Activated naive CD4-positive, alpha-beta T cell treated with anti-CD3 and anti-CD28 coated beads for 36 hours (primary cell): ENCODE measurements at regions of chr3 and their contacts with region 1.

Region 1: GRCh38 chr3:111616417-111617105 is 21.4 kb upstream of the ZBED2 start:
- DNase-seq: peak; percentile 83
- H3K4me3 Mint-ChIP-seq: no peak overlapping the region
- H3K27ac Mint-ChIP-seq: peak overlapping the region; percentile 97
- H3K4me1 Mint-ChIP-seq: peaks cover 79% of the 10 kb centered on the region
- H3K27me3 Mint-ChIP-seq: no peaks in the 10 kb centered on the region

Region 2: GRCh38 chr3:109806929-109807328 is 1809.6 kb before region 1 on chr3:
- CTCF ChIA-PET with region 1: interaction called, 4 read pairs
- intact Hi-C with region 1: loop called (anchors 10 kb)
- DNase-seq: peak; percentile 34
- H3K4me3 Mint-ChIP-seq: no peak overlapping the region
- H3K27ac Mint-ChIP-seq: no peak overlapping the region
- H3K4me1 Mint-ChIP-seq: peaks cover 37% of the 10 kb centered on the region
- H3K27me3 Mint-ChIP-seq: no peaks in the 10 kb centered on the region

Region 3: GRCh38 chr3:110955301-110955880 is 661.2 kb before region 1 on chr3:
- CTCF ChIA-PET with region 1: no interaction called
- intact Hi-C with region 1: no loop called
- DNase-seq: no peak
- H3K4me3 Mint-ChIP-seq: no peak overlapping the region
- H3K27ac Mint-ChIP-seq: no peak overlapping the region
- H3K4me1 Mint-ChIP-seq: no peaks in the 10 kb centered on the region
- H3K27me3 Mint-ChIP-seq: peaks cover 2% of the 10 kb centered on the region

Region 4: GRCh38 chr3:111260878-111261277 is 355.7 kb before region 1 on chr3:
- CTCF ChIA-PET with region 1: interaction called, 3 read pairs
- intact Hi-C with region 1: loop called (anchors 5 kb)
- DNase-seq: no peak
- H3K4me3 Mint-ChIP-seq: no peak overlapping the region
- H3K27ac Mint-ChIP-seq: no peak overlapping the region
- H3K4me1 Mint-ChIP-seq: peaks cover 13% of the 10 kb centered on the region
- H3K27me3 Mint-ChIP-seq: peaks cover 2% of the 10 kb centered on the region

Region 5: DNA sequence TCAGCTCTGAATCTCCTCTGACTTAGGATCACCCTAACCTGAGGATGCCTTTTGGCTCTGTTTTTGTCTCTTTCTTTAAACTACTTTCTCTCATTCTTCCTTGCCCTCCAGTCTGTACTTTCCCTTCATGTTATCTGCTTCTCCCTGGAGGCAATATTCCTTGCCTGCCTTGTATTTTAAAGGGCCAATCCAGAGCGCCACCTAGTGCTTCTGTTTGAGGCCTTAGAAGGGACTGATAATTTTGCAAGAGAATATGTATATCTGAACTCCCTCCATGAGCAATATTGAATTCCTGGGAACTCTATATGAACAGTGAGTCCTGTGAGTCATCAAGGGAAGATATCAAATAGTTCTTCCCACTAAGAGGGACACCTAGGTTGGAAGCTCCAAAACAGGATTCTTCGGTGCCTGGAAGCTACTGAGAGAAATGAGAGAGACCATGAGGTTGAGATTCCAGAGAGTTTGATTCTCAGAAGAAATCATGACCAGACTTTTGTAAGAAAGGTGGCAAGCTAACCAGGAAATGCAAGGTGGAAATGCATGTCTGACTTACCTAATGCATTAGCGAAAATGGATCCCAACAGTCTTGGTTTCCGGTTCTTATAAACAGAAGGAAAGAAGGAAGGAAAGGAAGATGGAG is 278.4 kb before region 1 on chr3:
- CTCF ChIA-PET with region 1: no interaction called
- intact Hi-C with region 1: loop called (anchors 5 kb)
- DNase-seq: peak; percentile 70
- H3K4me3 Mint-ChIP-seq: no peak overlapping the region
- H3K27ac Mint-ChIP-seq: no peak overlapping the region
- H3K4me1 Mint-ChIP-seq: peaks cover 15% of the 10 kb centered on the region
- H3K27me3 Mint-ChIP-seq: peaks cover 3% of the 10 kb centered on the region

Region 6: GRCh38 chr3:111547631-111548030 is 68.9 kb before region 1 on chr3:
- CTCF ChIA-PET with region 1: interaction called, 36 read pairs
- intact Hi-C with region 1: loop called (anchors 1 kb)
- DNase-seq: peak; percentile 74
- H3K4me3 Mint-ChIP-seq: no peak overlapping the region
- H3K27ac Mint-ChIP-seq: no peak overlapping the region
- H3K4me1 Mint-ChIP-seq: peaks cover 39% of the 10 kb centered on the region
- H3K27me3 Mint-ChIP-seq: no peaks in the 10 kb centered on the region

Region 7: DNA sequence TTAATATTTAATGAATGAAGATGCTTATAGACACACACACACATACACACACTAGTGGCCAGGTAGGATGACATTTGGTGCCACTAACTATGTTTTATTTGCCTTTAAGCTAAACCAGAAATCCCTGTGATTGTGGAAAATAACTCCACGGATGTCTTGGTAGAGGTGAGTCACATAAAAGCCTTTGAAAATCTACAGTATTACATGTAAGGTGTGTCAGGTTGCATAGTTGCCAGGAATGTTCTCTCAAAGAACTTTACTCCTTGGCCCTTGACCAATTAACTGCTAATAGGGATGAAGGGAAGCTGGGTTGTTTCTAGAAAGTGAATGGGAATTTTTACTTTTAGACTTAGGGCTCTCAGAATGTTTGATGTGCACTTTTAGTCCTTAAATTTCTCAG is 31.3 kb before region 1 on chr3:
- CTCF ChIA-PET with region 1: interaction called, 88 read pairs
- intact Hi-C with region 1: no loop called
- DNase-seq: no peak
- H3K4me3 Mint-ChIP-seq: no peak overlapping the region
- H3K27ac Mint-ChIP-seq: no peak overlapping the region
- H3K4me1 Mint-ChIP-seq: peaks cover 85% of the 10 kb centered on the region
- H3K27me3 Mint-ChIP-seq: no peaks in the 10 kb centered on the region

Region 8: GRCh38 chr3:111604119-111604518 is 12.4 kb before region 1 on chr3:
- CTCF ChIA-PET with region 1: interaction called, 23 read pairs
- intact Hi-C with region 1: loop called (anchors 1 kb)
- DNase-seq: peak; percentile 70
- H3K4me3 Mint-ChIP-seq: peak overlapping the region; percentile 53
- H3K27ac Mint-ChIP-seq: peak overlapping the region; percentile 97
- H3K4me1 Mint-ChIP-seq: peaks cover 87% of the 10 kb centered on the region
- H3K27me3 Mint-ChIP-seq: no peaks in the 10 kb centered on the region